Heart left ventricle (tissue), 16 donors: ENCODE measurements at regions of chr6 and their contacts with region 1.

Region 1: DNA sequence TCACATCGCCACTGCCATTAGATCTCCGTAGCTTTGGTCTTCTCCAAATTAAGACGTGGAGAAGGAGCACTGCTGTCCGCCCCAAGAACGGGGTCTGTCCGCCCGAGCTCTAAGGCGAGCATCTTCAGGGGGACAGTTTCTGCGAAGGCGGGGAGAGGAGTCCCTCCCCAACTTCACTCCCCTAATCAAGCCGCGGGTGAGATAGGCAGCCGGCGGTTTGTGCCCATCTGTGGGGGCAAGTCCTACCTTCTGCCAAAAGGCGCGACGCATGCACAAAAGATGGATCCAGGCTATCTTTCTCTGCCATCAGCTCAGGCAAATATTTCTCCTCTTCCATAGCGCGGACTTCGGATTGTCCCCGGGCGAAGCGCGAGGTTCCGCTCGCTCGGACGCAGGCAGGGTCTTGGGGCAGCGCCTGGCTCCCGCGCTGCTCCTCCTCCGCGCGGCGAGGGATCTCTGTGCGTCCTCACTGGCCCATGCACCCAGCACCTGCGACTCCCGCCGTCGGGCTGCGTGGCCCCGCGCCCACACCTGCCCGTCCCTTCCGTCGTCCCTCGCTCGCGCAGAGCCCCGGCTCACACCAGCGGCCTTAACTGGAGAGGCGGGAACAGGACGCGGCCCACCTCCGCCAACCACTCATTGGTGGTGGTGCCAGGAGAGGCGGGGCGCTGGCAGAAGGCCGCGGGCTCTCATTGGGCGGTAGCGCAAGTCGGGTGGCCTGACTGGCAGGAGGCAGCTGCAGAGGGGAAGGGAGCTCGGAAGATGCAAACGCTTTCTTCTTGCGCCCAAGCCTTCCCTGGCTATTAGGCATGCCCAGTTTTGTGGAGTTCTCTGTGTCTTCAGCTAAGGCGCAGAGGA is at the start of gene KHDRBS2:
- DNase-seq: peak; percentile 72 to 90 (median 73)
- ATAC-seq: peak; percentile 67 to 96 (median 94)
- H3K4me3 ChIP-seq: peak within 1 kb of the TSS in 11 of 12 donors; percentile 10 to 58 (median 42)
- H3K27ac ChIP-seq: no peak within 1 kb of the TSS
- H3K4me1 ChIP-seq: peaks cover 0 to 8% (median 0%) of the 10 kb centered on the region in 12 donors
- H3K27me3 ChIP-seq: peaks cover 0 to 36% (median 11%) of the 10 kb centered on the region in 9 donors
- CTCF ChIP-seq: no peak
- POLR2A ChIP-seq: no peak
- total RNA-seq, gene KHDRBS2: 0.15 to 0.29 TPM in 2 of 9 donors, not detected in the others

Region 2: DNA sequence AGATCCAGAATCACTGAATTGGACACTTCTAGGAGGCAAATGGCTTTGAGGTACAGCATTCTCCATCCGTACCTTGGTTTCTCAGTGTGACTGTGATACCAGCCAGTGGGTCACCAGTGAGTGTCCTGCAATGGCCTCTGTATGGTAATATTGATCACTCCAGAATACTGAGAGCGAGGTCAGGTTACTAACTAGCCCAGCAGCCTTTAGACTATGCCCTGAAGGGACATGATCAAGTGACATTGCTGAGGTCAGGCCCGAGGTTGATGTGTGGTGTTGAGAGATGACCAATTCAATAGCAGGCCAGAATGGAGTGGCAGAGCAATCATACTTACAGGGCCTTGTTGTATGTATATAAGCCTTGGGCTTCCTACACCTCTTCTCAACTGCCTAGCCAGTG is 475.8 kb before region 1 on chr6:
- intact Hi-C with region 1: loop called in 1 of 10 experiments (anchors 10 kb)
- DNase-seq: no peak
- ATAC-seq: no peak
- H3K4me3 ChIP-seq: no peak overlapping the region
- H3K27ac ChIP-seq: no peak overlapping the region
- H3K4me1 ChIP-seq: no peaks in the 10 kb centered on the region
- H3K27me3 ChIP-seq: no peaks in the 10 kb centered on the region
- CTCF ChIP-seq: no peak
- POLR2A ChIP-seq: no peak